ENCODE measurements at regions of chr2 and their contacts with region 1.

Region 1: DNA sequence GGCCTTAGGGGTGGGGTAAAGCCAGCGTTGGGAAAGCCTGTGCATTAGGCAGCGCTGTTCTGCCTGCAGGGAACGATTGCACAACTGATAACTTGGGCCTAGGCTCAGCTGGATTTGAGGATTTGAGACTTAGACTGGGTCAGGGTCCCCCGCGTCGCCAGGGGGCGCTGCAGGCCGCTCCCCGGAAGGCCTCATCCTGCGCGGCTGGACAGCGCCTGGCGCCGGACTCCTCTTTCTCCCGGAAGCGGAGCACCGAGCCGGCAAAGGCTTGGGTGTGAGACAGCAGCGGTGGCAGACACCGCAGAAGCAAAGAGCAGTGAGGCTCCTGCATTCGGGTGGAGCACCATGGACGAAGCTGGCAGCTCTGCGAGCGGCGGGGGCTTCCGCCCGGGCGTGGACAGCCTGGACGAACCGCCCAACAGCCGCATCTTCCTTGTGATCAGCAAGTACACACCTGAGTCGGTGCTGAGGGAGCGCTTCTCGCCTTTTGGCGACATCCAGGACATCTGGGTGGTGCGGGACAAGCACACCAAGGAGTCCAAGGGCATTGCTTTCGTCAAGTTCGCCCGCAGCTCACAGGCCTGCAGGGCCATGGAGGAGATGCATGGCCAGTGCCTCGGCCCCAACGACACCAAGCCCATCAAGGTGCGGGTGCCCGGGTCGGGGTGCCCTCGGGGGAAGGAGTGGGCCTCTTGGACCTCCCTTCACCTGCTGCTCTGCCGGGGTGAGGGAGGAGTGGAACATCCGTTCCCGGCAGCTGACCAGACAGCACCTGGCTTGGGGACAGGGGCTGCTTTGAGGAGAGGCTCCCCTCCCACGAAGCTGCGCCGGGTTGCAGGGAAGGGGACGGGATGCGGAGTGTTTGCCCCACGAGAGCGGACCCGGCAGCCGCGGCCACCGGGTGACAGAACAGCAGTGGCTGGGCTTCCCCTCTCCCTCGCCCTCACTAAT is at the start of gene RBM45:
- DNase-seq: peak; percentile 69
- ATAC-seq: peak; percentile 100
- H3K4me3 ChIP-seq: peak within 1 kb of the TSS; percentile 92 to 93
- H3K27ac ChIP-seq: peak within 1 kb of the TSS; percentile 78
- H3K4me1 ChIP-seq: peaks cover 6% of the 10 kb centered on the region
- H3K27me3 ChIP-seq: no peaks in the 10 kb centered on the region
- CTCF ChIP-seq: peak; percentile 98
- total RNA-seq, gene RBM45: 14.1 TPM

Region 2: DNA sequence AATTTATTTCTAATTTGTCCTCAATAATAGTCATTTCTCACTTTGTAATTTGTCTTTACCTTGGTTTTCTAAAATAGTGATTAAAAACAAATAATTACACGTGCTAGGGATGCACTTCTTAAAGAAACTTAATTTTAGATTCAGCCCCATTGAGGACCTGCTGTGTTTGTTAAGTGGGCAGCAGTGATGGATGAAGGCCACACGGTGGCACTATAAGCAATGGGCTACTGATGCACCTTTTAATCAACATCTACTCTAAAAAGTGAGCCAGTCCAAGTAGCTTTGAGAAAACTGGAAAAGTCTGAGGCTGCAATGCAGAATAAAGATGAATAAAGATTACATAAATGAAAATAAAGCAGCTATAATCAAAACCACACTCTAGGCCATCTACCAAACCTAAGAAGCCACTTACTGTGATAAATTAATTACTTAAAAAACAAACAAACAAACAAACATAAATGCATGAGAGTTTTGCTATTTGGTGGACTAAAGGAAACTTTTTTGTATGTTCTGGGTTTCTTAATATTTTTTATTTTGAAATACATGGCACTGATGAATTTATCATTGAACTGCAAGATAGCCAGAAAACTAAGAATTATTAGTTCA is 129.2 kb before region 1 on chr2:
- CTCF ChIA-PET with region 1: no interaction called
- POLR2A ChIA-PET with region 1: no interaction called
- in situ Hi-C with region 1: no loop called
- intact Hi-C with region 1: loop called (anchors 10 kb)
- DNase-seq: peak; percentile 33
- ATAC-seq: peak; percentile 87
- H3K4me3 ChIP-seq: no peak overlapping the region
- H3K27ac ChIP-seq: no peak overlapping the region
- H3K4me1 ChIP-seq: no peaks in the 10 kb centered on the region
- H3K27me3 ChIP-seq: no peaks in the 10 kb centered on the region
- CTCF ChIP-seq: peak; percentile 89

Region 3: DNA sequence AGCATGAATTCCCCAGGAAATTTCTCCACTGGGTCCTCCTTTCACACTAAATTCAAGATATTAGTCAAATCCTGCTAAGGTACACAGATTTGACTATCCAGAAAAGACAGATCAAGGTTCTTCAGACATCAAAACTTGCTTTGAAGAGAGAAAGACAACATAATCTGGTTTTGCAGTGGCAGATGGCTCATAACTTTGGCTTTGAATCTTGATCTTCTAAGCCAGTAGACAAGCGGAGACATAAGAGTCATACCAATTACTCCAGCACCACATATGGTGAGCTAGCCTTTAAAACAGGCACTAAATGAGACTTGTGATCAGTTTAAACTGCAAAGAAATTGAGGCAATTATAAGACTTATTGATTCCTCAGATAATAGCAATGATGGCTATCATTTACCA is 69.2 kb before region 1 on chr2:
- CTCF ChIA-PET with region 1: no interaction called
- POLR2A ChIA-PET with region 1: no interaction called
- in situ Hi-C with region 1: no loop called
- intact Hi-C with region 1: no loop called
- DNase-seq: no peak
- ATAC-seq: no peak
- H3K4me3 ChIP-seq: no peak overlapping the region
- H3K27ac ChIP-seq: no peak overlapping the region
- H3K4me1 ChIP-seq: no peaks in the 10 kb centered on the region
- H3K27me3 ChIP-seq: no peaks in the 10 kb centered on the region; the same call in 1 of the 2 replicates
- CTCF ChIP-seq: no peak

Region 4: GRCh38 chr2:178280244-178280852 is 167.9 kb after region 1 on chr2:
- CTCF ChIA-PET with region 1: no interaction called
- POLR2A ChIA-PET with region 1: no interaction called
- in situ Hi-C with region 1: no loop called
- intact Hi-C with region 1: loop called (anchors 2 kb)
- DNase-seq: peak; percentile 25
- ATAC-seq: 0 out of 2 replicates have a peak, but pooled peaks have one; percentile 42
- H3K4me3 ChIP-seq: no peak overlapping the region
- H3K27ac ChIP-seq: no peak overlapping the region
- H3K4me1 ChIP-seq: no peaks in the 10 kb centered on the region
- H3K27me3 ChIP-seq: no peaks in the 10 kb centered on the region; the same call in 1 of the 2 replicates
- CTCF ChIP-seq: peak; percentile 76; the same call in 1 of the 2 replicates

Region 5: DNA sequence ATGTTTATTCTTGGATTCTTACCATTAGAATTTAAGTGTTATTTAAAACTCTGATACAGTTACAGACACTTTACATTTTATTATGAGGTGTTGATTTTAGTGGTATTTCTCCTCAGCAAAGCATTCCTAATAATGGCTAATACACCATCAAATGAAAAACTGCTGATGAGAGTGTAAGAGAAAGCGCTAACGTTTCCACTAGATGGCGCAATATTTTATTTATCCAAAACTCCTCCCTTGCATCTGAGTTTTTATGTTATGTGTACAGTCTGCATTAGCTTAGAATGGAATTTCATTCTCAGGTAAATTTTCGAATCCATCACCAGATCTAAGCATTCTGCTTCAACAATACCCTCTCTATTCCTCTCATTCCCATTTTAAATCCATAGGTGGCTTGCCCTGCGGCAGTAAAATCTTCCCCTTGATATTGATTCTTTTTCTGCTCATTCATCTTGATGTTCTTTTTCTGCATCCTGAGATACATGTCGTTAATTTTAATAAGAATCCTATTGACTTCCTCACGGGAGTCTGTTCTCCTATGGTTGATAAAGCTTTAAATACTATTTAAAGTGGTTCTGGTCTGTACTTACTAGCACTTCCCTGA is 284.6 kb after region 1 on chr2:
- CTCF ChIA-PET with region 1: no interaction called
- POLR2A ChIA-PET with region 1: no interaction called
- in situ Hi-C with region 1: no loop called
- intact Hi-C with region 1: loop called (anchors 5 kb)
- DNase-seq: peak; percentile 32
- ATAC-seq: peak; percentile 85
- H3K4me3 ChIP-seq: no peak overlapping the region
- H3K27ac ChIP-seq: no peak overlapping the region
- H3K4me1 ChIP-seq: no peaks in the 10 kb centered on the region
- H3K27me3 ChIP-seq: no peaks in the 10 kb centered on the region
- CTCF ChIP-seq: peak; percentile 74; the same call in 1 of the 2 replicates

Measured in Panc1 (cell line).